ENCODE measurements at regions of chr11 and their contacts with region 1.

Region 1: GRCh38 chr11:12159351-12160099 is 49.1 kb downstream of the MICAL2 start:
- DNase-seq: peak; percentile 67 to 81 (median 74)
- H3K4me3 ChIP-seq: peak overlapping the region in 1 of 3 experiments; percentile 43
- H3K4me3 Mint-ChIP-seq: peak overlapping the region in 1 of 2 donors; percentile 43
- H3K27ac ChIP-seq: peak overlapping the region; percentile 95 to 96
- H3K27ac Mint-ChIP-seq: peak overlapping the region; percentile 91 to 100 (median 97)
- H3K4me1 ChIP-seq: peaks cover 59 to 71% of the 10 kb centered on the region in 2 donors
- H3K4me1 Mint-ChIP-seq: peaks cover 63% of the 10 kb centered on the region
- H3K27me3 ChIP-seq: no peaks in the 10 kb centered on the region
- H3K27me3 Mint-ChIP-seq: peaks cover 0 to 5% (median 4%) of the 10 kb centered on the region in 3 donors
- CTCF ChIP-seq: no peak

Region 2: GRCh38 chr11:12066799-12067508 is 92.6 kb before region 1 on chr11:
- intact Hi-C with region 1: no loop called
- DNase-seq: peak; percentile 23 to 48 (median 27)
- H3K4me3 ChIP-seq: no peak overlapping the region
- H3K4me3 Mint-ChIP-seq: peak overlapping the region in 1 of 2 donors; percentile 49
- H3K27ac ChIP-seq: no peak overlapping the region
- H3K27ac Mint-ChIP-seq: peak overlapping the region in 2 of 7 donors; percentile 33 to 64
- H3K4me1 ChIP-seq: peaks cover 14 to 24% of the 10 kb centered on the region in 2 donors
- H3K4me1 Mint-ChIP-seq: peaks cover 29% of the 10 kb centered on the region
- H3K27me3 ChIP-seq: no peaks in the 10 kb centered on the region
- H3K27me3 Mint-ChIP-seq: peaks cover 4 to 7% (median 6%) of the 10 kb centered on the region in 3 donors
- CTCF ChIP-seq: no peak

Region 3: GRCh38 chr11:12110201-12110713 is 49.3 kb before region 1 on chr11 and contains the start of gene MICAL2:
- intact Hi-C with region 1: loop called in 1 of 2 experiments (anchors 5 kb)
- DNase-seq: peak; percentile 79 to 85 (median 80)
- H3K4me3 ChIP-seq: peak within 1 kb of the TSS; percentile 76 to 98 (median 83)
- H3K4me3 Mint-ChIP-seq: peak within 1 kb of the TSS; percentile 85 to 93
- H3K27ac ChIP-seq: peak within 1 kb of the TSS in 1 of 2 donors; percentile 76
- H3K27ac Mint-ChIP-seq: peak within 1 kb of the TSS; percentile 50 to 95 (median 76)
- H3K4me1 ChIP-seq: peaks cover 39 to 61% of the 10 kb centered on the region in 2 donors
- H3K4me1 Mint-ChIP-seq: peaks cover 66% of the 10 kb centered on the region
- H3K27me3 ChIP-seq: no peaks in the 10 kb centered on the region
- H3K27me3 Mint-ChIP-seq: peaks cover 0 to 4% (median 1%) of the 10 kb centered on the region in 3 donors
- CTCF ChIP-seq: no peak
- polyA plus RNA-seq, gene MICAL2: 39.8 to 72.5 (median 44.0) TPM

Measured in CD14-positive monocyte (primary cell).